Calu3 (cell line): ENCODE measurements at regions of chr2 and their contacts with region 1.

Region 1: GRCh38 chr2:229586746-229587705 is 127.3 kb downstream of the DNER start:
- DNase-seq: peak; percentile 89
- H3K4me3 Mint-ChIP-seq: peak overlapping the region; percentile 57
- H3K27ac Mint-ChIP-seq: peak overlapping the region; percentile 55
- H3K4me1 Mint-ChIP-seq: peaks cover 15% of the 10 kb centered on the region
- H3K27me3 Mint-ChIP-seq: no peaks in the 10 kb centered on the region
- CTCF ChIP-seq: peak; percentile 97

Region 2: GRCh38 chr2:229133155-229133772 is 453.8 kb before region 1 on chr2:
- CTCF ChIA-PET with region 1: interaction called, 3 read pairs
- intact Hi-C with region 1: loop called (anchors 1 kb)
- DNase-seq: peak; percentile 41
- H3K4me3 Mint-ChIP-seq: no peak overlapping the region
- H3K27ac Mint-ChIP-seq: no peak overlapping the region
- H3K4me1 Mint-ChIP-seq: no peaks in the 10 kb centered on the region
- H3K27me3 Mint-ChIP-seq: no peaks in the 10 kb centered on the region
- CTCF ChIP-seq: peak; percentile 46

Region 3: DNA sequence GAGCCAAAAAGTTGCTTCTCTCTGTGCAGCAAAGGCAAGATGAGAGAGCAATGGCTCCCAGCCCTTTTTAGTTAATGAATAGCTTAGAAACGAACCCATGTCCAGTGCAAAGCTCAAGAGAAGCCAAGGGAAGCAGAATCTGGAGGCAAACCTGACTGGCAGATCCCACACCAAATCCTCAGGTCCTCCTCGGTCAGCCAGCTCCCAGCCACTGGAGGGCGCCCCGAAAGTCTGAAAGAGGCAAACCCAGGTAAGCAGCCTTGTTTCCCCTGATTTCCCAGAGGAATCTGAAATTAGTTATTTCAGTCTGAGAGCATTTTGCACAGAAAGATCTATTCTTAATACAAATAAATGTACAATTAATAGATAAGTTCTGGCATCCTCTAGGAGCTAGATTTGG is 244.7 kb before region 1 on chr2:
- CTCF ChIA-PET with region 1: interaction called, 14 read pairs
- intact Hi-C with region 1: loop called (anchors 1 kb)
- DNase-seq: peak; percentile 85
- H3K4me3 Mint-ChIP-seq: no peak overlapping the region
- H3K27ac Mint-ChIP-seq: no peak overlapping the region
- H3K4me1 Mint-ChIP-seq: peaks cover 12% of the 10 kb centered on the region
- H3K27me3 Mint-ChIP-seq: no peaks in the 10 kb centered on the region
- CTCF ChIP-seq: peak; percentile 64

Region 4: DNA sequence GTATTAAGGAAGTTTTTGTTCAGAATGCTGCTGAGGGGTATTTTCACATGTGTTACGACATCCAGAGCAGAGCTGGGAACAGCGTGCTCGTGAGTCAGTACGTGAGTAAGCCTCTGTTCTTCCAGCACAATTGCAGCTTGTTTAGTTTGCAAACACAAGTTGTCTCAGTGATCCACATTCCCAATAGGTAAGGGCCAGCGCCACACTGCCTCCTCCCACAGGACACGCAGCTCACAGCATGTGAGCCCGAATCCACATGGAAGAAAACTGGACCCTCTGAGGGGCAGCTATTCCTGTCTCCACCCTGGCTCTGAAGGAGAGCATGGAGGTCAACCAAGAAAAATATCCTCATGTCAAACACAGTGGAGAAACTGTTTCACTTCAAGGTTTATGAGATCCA is 142.0 kb before region 1 on chr2:
- CTCF ChIA-PET with region 1: no interaction called
- intact Hi-C with region 1: loop called (anchors 5 kb)
- DNase-seq: peak; percentile 68
- H3K4me3 Mint-ChIP-seq: peak overlapping the region; percentile 10
- H3K27ac Mint-ChIP-seq: peak overlapping the region; percentile 83
- H3K4me1 Mint-ChIP-seq: peaks cover 17% of the 10 kb centered on the region
- H3K27me3 Mint-ChIP-seq: no peaks in the 10 kb centered on the region
- CTCF ChIP-seq: no peak